Esophagus squamous epithelium (tissue), 5 donors: ENCODE measurements at regions of chr1 and their contacts with region 1.

Region 1: GRCh38 chr1:206663832-206664652 is 20.7 kb upstream of the MAPKAPK2 start:
- DNase-seq: no peak
- H3K4me3 ChIP-seq: peak overlapping the region in 1 of 4 donors; percentile 48
- H3K27ac ChIP-seq: no peak overlapping the region
- H3K4me1 ChIP-seq: peaks cover 0 to 25% (median 12%) of the 10 kb centered on the region in 3 donors
- H3K27me3 ChIP-seq: peaks cover 0 to 15% (median 0%) of the 10 kb centered on the region in 4 donors
- CTCF ChIP-seq: peak; percentile 86 to 93 (median 90)
- POLR2A ChIP-seq: no peak

Region 2: DNA sequence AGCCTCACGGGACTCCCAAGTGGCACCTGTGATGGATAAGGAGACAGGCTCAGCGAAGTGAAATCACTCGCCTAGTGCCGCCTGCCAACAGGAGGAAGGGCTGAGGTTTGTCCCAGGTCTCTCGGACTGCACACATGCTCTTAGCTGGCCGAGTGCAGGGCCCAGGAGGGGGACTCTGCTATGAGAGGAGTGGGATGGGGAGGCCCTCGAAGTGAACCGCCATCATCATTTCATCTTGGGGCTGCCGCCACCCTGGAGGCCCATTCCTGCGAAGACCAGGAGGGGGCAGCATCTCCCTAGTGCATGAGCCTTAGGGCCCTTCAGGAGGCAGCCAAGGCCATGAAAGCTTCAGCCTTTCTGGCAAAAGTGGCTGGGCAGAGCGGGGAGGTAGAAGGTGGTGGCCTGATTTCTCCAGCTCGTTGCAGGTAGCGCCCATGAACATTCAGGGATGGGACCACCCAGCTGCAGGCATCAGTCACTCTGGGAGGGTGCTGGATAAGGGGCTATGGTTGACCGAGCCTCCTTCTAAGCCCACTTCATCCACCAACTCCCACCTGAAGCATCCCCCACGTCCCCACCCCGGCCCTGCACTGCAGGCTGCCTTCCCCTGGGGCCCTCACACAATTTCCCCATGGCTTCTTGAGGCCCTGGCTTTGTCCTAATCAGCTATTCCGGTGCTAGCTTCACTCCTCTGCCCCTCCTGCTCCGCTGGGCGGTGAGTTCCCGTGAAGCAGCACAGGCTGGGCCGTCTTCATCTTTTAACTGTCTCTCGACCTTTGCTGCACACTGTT is 173.9 kb before region 1 on chr1:
- intact Hi-C with region 1: loop called (anchors 10 kb)
- DNase-seq: no peak
- H3K4me3 ChIP-seq: no peak overlapping the region
- H3K27ac ChIP-seq: no peak overlapping the region
- H3K4me1 ChIP-seq: peaks cover 4 to 24% (median 4%) of the 10 kb centered on the region in 3 donors
- H3K27me3 ChIP-seq: no peaks in the 10 kb centered on the region
- CTCF ChIP-seq: peak; percentile 67 to 95 (median 92)
- POLR2A ChIP-seq: no peak

Region 3: GRCh38 chr1:206634365-206635079 is 29.5 kb before region 1 on chr1:
- intact Hi-C with region 1: loop called (anchors 5 kb)
- DNase-seq: peak; percentile 20
- H3K4me3 ChIP-seq: peak overlapping the region in 3 of 4 donors; percentile 71 to 91 (median 81)
- H3K27ac ChIP-seq: peak overlapping the region; percentile 69 to 90 (median 82)
- H3K4me1 ChIP-seq: peaks cover 4 to 50% (median 20%) of the 10 kb centered on the region in 3 donors
- H3K27me3 ChIP-seq: no peaks in the 10 kb centered on the region
- CTCF ChIP-seq: peak; percentile 84 to 89 (median 86)
- POLR2A ChIP-seq: no peak